ENCODE measurements at regions of chr2 and their contacts with region 1.

Region 1: GRCh38 chr2:76711490-76711889 is 810.7 kb downstream of the LRRTM4 start:
- DNase-seq: no peak
- H3K4me3 ChIP-seq: no peak overlapping the region
- H3K27ac ChIP-seq: no peak overlapping the region
- H3K27me3 ChIP-seq: no peaks in the 10 kb centered on the region
- CTCF ChIP-seq: no peak

Region 2: GRCh38 chr2:76763276-76763675 is 51.8 kb after region 1 on chr2:
- intact Hi-C with region 1: loop called in 1 of 2 experiments (anchors 2 kb)
- DNase-seq: no peak
- H3K4me3 ChIP-seq: no peak overlapping the region
- H3K27ac ChIP-seq: no peak overlapping the region
- H3K27me3 ChIP-seq: no peaks in the 10 kb centered on the region
- CTCF ChIP-seq: no peak

Measured in dorsolateral prefrontal cortex (tissue), 120 donors.